Caco-2 (cell line): ENCODE measurements at regions of chr9 and their contacts with region 1.

Region 1: GRCh38 chr9:68731857-68732256 is 26.8 kb downstream of the PIP5K1B start:
- DNase-seq: no peak
- H3K4me3 ChIP-seq: no peak overlapping the region
- H3K4me3 Mint-ChIP-seq: peak overlapping the region; percentile 64
- H3K27ac Mint-ChIP-seq: peak overlapping the region; percentile 76
- H3K4me1 ChIP-seq: no peaks in the 10 kb centered on the region
- H3K4me1 Mint-ChIP-seq: peaks cover 17% of the 10 kb centered on the region
- H3K27me3 ChIP-seq: no peaks in the 10 kb centered on the region
- H3K27me3 Mint-ChIP-seq: no peaks in the 10 kb centered on the region
- CTCF ChIP-seq: no peak

Region 2: DNA sequence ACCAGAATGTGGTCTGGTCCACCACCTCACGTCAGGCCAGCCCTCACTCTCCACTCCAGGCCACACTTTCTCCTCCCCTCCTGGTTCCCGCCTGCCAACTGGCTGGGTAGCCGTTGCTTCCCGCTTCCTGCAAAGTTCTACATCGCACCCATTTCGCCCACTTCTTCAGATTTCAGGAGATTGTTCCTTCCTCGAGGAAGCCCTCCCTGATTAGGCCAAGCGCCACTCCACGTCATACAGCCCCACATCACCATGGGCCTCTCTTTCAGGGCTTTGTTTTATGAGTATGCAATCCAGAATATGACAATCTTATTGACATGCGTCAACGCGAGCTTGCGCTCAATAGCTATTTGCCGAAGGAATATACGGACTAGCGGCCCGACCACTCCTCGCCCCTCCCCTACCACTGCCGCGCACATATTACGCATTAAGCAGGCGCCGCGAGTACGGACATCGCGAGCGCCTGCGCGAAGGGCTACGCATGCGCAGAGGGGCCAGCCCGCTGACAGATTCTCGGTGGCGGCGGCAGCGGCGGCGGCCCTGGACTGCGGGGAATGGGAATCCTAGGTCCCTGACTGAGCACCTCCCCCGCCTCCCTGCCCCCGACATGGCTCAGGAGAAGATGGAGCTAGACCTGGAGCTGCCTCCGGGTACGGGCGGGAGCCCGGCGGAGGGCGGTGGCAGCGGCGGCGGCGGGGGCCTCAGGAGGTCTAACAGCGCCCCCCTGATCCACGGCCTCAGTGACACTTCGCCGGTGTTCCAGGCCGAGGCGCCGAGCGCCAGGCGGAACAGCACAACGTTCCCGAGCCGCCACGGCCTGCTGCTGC is 47.9 kb after region 1 on chr9:
- CTCF ChIA-PET with region 1: no interaction called
- POLR2A ChIA-PET with region 1: no interaction called
- intact Hi-C with region 1: loop called (anchors 5 kb)
- DNase-seq: peak; percentile 81 to 82
- H3K4me3 ChIP-seq: peak overlapping the region; percentile 53
- H3K4me3 Mint-ChIP-seq: no peak overlapping the region
- H3K27ac Mint-ChIP-seq: no peak overlapping the region
- H3K4me1 ChIP-seq: no peaks in the 10 kb centered on the region
- H3K4me1 Mint-ChIP-seq: peaks cover 6% of the 10 kb centered on the region
- H3K27me3 ChIP-seq: no peaks in the 10 kb centered on the region
- H3K27me3 Mint-ChIP-seq: no peaks in the 10 kb centered on the region
- CTCF ChIP-seq: no peak

Region 3: DNA sequence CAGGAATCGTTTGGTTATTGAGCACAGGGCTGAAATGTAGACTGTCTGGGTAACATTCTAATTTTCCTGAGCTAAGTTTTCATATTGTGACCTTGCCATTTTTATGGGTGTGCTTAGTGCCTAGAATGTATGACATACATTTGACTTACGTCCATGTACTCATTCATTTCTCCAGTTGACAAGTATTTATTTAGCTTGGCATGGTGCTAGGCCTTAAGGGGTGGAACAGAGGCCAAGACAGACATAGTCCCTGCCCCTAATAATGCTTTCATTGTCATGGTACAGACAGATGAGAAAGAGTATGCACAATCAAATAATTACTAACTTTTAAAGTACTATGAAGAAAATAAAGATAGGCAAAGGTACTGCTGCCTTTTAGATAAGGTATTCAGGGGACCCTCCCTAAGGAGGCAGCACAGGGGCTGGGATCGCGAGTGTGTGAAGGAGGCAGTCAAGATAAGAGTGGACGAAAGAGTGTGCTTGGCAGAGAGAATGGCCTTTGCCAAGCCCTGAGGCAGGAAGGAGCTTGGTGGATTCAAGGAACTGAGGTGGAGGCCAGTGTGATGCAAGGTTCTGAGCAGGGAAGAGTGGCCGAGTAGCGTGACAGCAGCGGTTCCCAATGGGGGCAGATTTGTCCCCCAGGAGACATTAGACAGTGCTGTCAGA is 101.1 kb after region 1 on chr9:
- CTCF ChIA-PET with region 1: no interaction called
- POLR2A ChIA-PET with region 1: no interaction called
- intact Hi-C with region 1: no loop called
- DNase-seq: no peak
- H3K4me3 ChIP-seq: no peak overlapping the region
- H3K4me3 Mint-ChIP-seq: no peak overlapping the region
- H3K27ac Mint-ChIP-seq: no peak overlapping the region
- H3K4me1 ChIP-seq: no peaks in the 10 kb centered on the region
- H3K4me1 Mint-ChIP-seq: no peaks in the 10 kb centered on the region
- H3K27me3 ChIP-seq: no peaks in the 10 kb centered on the region
- H3K27me3 Mint-ChIP-seq: no peaks in the 10 kb centered on the region
- CTCF ChIP-seq: no peak